AG04449 (cell line): ENCODE measurements at regions of chr1 and their contacts with region 1.

Region 1: GRCh38 chr1:209354111-209354839 is 229.2 kb upstream of the CAMK1G start:
- DNase-seq: peak; percentile 82
- H3K4me3 ChIP-seq: no peak overlapping the region
- CTCF ChIP-seq: peak; percentile 92

Region 2: GRCh38 chr1:208652296-208653160 is 701.7 kb before region 1 on chr1:
- CTCF ChIA-PET with region 1: interaction called, 10 read pairs
- POLR2A ChIA-PET with region 1: no interaction called
- DNase-seq: peak; percentile 28
- H3K4me3 ChIP-seq: no peak overlapping the region
- CTCF ChIP-seq: peak; percentile 78

Region 3: GRCh38 chr1:209029737-209030136 is 324.5 kb before region 1 on chr1:
- CTCF ChIA-PET with region 1: no interaction called
- POLR2A ChIA-PET with region 1: no interaction called
- DNase-seq: no peak
- H3K4me3 ChIP-seq: no peak overlapping the region
- CTCF ChIP-seq: no peak

Region 4: GRCh38 chr1:209040351-209040750 is 313.9 kb before region 1 on chr1:
- CTCF ChIA-PET with region 1: no interaction called
- POLR2A ChIA-PET with region 1: no interaction called
- DNase-seq: no peak
- H3K4me3 ChIP-seq: no peak overlapping the region
- CTCF ChIP-seq: no peak

Region 5: DNA sequence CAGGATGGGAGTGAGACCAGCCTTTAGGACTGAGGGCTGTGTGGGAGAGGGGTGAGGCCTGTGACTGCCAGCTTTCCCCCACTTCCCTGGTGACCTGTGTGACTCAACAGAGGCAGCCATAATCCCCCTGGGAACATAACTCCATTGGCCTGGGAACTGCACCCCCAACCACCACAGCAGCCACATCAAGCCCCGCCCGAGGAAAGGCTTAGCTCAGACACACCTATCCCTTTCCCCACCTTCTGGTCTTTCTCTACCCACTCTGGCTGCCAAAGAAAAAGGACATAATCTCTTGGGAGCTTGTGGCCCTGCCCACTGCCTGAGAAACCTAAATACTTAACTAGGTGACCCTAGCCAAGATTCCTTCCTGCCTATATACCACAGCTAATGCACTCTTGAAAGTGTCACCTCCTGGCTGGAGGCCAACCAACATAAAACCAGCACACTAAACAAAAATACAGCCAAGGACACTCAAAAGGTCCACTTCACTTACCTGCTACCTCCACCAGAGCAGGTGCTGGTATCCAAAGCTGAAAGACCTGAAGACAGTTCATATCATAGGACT is 177.3 kb before region 1 on chr1:
- CTCF ChIA-PET with region 1: no interaction called
- POLR2A ChIA-PET with region 1: no interaction called
- DNase-seq: no peak
- H3K4me3 ChIP-seq: no peak overlapping the region
- CTCF ChIP-seq: no peak

Region 6: GRCh38 chr1:209326831-209327230 is 27.4 kb before region 1 on chr1:
- CTCF ChIA-PET with region 1: interaction called, 27 read pairs
- POLR2A ChIA-PET with region 1: no interaction called
- DNase-seq: no peak
- H3K4me3 ChIP-seq: no peak overlapping the region
- CTCF ChIP-seq: no peak

Region 7: DNA sequence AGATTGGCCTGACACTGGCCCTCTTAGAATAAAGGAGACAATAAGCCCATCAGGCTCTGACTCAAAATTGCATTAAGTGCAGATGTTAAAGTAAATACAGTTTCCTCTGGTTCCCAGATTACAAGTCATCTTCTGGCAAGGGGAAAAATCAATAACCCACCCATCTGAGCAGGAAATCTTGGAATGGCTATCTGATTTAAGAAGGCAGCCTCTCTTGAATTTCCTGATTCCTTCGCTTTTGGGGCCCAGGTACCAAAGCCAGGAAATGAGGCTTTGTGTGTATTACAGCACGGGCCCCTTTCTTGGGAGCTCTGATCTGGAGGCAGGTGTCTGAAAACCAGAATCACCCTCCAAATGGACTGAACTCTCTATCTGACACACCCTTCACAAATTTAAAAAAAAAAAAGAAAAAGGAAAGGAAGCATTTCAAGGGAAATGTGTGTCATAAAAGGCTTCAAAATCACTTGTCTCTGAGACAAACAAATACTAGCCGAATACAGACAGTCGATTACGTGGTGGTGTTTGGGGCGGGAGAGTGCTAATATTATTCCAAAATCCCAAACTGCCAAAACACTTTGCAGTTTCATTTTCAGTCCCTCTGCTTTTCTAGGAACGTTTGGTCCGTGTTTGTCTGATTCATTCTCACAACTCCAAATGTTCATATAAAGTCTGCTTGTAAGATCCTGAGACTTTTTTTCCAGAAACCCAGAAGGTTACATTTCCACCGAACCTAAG is 11.7 kb before region 1 on chr1:
- CTCF ChIA-PET with region 1: interaction called, 162 read pairs
- POLR2A ChIA-PET with region 1: no interaction called
- DNase-seq: no peak
- H3K4me3 ChIP-seq: no peak overlapping the region
- CTCF ChIP-seq: no peak

Region 8: DNA sequence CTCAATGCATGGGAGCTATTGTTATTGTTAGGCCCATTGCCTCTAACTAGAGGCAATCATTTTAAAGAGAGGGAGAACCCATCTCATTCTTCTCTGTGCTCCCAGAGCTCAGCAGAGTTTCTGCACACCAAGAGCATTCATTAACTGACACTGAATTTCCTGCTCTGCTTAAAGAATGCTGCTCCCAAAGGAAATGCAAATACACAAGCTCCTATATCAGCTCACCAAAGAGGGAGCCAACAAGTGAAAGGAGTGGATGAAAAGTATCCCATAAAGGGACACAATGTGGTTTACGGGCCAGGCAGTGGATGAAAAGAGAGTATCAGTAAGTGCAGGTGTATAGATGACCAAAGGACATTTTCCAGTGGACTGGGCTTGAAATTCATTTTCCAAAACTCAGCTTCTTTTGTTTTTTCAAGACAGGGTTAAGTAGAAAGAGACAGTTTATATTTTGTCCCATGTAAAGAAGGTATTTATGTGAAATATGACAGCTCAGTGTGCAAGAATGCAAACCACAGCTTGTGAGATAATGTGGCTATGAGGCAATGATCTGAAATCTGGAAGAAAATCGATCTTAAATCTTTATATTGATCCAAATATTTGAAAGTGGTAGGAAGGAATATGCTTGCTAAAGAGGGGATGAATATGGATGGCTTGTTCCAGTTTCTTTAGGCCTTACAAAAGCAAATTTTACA is 21.5 kb after region 1 on chr1:
- CTCF ChIA-PET with region 1: interaction called, 162 read pairs
- POLR2A ChIA-PET with region 1: no interaction called
- DNase-seq: no peak
- H3K4me3 ChIP-seq: no peak overlapping the region
- CTCF ChIP-seq: no peak

Region 9: DNA sequence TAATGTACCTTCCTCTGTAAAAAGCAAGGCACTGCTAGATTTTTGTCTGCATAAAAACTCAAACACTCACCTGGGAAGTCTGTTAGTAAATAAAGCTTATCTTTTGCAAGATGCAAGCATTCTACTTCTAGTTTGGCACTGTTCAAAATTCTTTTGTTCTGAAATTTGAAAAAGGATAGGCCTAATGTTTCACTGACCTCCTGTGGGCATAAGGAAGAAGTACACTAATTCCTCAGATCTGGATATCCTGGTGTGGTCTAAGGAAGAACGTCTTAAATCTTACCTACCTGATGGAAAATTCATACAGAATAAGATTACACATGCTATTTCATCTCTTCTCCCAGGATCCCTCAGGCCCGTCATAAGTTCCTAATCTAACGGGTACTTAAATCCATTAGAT is 135.7 kb after region 1 on chr1:
- CTCF ChIA-PET with region 1: interaction called, 13 read pairs
- POLR2A ChIA-PET with region 1: no interaction called
- DNase-seq: no peak
- H3K4me3 ChIP-seq: no peak overlapping the region
- CTCF ChIP-seq: peak; percentile 44

Region 10: GRCh38 chr1:209808059-209808581 is 453.8 kb after region 1 on chr1:
- CTCF ChIA-PET with region 1: no interaction called
- POLR2A ChIA-PET with region 1: no interaction called
- DNase-seq: peak; percentile 87
- H3K4me3 ChIP-seq: no peak overlapping the region
- CTCF ChIP-seq: no peak